ENCODE measurements at regions of chr12 and their contacts with region 1.

Region 1: GRCh38 chr12:49763006-49763591 is 21.7 kb downstream of the TMBIM6 start:
- H3K4me3 ChIP-seq: no peak overlapping the region
- H3K27ac ChIP-seq: no peak overlapping the region
- H3K4me1 ChIP-seq: no peaks in the 10 kb centered on the region
- CTCF ChIP-seq: 0 out of 2 replicates have a peak, but pooled peaks have one; percentile 25

Region 2: GRCh38 chr12:49698619-49699545 is 64.2 kb before region 1 on chr12:
- CTCF ChIA-PET with region 1: no interaction called
- POLR2A ChIA-PET with region 1: no interaction called
- H3K4me3 ChIP-seq: peak overlapping the region; percentile 13
- H3K27ac ChIP-seq: no peak overlapping the region
- H3K4me1 ChIP-seq: peaks cover 6% of the 10 kb centered on the region; the same call in 1 of the 2 replicates
- CTCF ChIP-seq: no peak

Region 3: DNA sequence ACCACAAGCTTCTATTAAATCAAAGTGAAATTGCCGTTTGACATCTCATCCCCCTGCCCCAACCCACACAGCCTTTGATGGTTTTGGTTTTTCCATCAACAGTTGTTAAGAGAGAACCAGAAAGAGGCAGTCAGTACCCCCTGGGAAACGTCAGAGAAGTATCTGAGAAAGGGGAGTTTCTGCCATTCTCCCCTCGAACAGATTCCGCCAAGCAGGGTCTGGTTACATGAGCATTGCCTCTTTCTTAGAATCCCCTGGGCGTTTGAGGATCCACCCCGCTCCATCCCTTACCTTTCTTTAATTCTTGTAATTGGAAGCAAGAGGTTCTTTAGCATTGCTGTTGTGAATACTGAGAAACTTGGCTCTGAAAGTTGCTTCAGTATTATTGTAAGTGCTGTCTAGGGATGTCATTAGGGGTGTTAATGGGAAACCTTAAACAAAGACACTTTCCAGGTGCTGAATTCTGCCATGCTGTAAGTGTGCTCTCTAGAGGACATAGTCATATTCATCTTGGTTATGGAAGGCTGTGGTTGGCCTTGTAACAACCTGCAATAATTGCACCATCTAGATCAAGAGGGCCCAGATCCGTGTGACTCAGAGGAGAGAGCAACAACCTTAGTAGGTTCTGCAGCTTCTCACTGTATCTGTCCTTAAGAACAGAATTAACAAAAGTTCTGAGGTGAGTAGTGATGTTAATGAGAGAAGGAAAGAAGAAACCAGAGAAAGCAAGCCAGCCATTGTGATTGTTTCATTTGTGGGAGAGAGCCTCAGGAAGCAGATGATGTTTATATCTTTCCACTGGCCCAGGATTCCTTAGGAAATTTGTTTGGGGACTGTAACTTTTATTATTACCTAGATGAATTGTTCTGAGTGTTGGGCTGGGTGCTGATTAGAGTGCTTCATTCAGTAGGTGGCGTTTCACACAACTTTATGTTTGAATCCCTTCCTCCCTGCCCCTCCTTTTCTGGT is 12.8 kb before region 1 on chr12:
- CTCF ChIA-PET with region 1: interaction called, 17 read pairs
- POLR2A ChIA-PET with region 1: interaction called, 6 read pairs
- H3K4me3 ChIP-seq: no peak overlapping the region
- H3K27ac ChIP-seq: peak overlapping the region; percentile 67
- H3K4me1 ChIP-seq: peaks cover 31% of the 10 kb centered on the region
- CTCF ChIP-seq: no peak

Region 4: GRCh38 chr12:49842519-49843352 is 79.6 kb after region 1 on chr12 and contains the start of gene BCDIN3D:
- CTCF ChIA-PET with region 1: interaction called, 16 read pairs
- POLR2A ChIA-PET with region 1: interaction called, 3 read pairs
- H3K4me3 ChIP-seq: peak within 1 kb of the TSS; percentile 60
- H3K27ac ChIP-seq: peak within 1 kb of the TSS; percentile 89
- H3K4me1 ChIP-seq: peaks cover 6% of the 10 kb centered on the region; the same call in 1 of the 2 replicates
- CTCF ChIP-seq: no peak

Region 5: GRCh38 chr12:50353869-50354593 is 590.9 kb after region 1 on chr12:
- CTCF ChIA-PET with region 1: no interaction called
- POLR2A ChIA-PET with region 1: no interaction called
- H3K4me3 ChIP-seq: no peak overlapping the region
- H3K27ac ChIP-seq: no peak overlapping the region
- H3K4me1 ChIP-seq: no peaks in the 10 kb centered on the region
- CTCF ChIP-seq: no peak